BJ (cell line): ENCODE measurements at regions of chr14 and their contacts with region 1.

Region 1: GRCh38 chr14:103292426-103293374 is 41.3 kb upstream of the EIF5 start:
- DNase-seq: no peak
- H3K4me3 ChIP-seq: no peak overlapping the region
- H3K27me3 ChIP-seq: peaks cover 11% of the 10 kb centered on the region
- CTCF ChIP-seq: peak; percentile 96

Region 2: GRCh38 chr14:103078093-103078749 is 214.5 kb before region 1 on chr14:
- CTCF ChIA-PET with region 1: interaction called, 83 read pairs
- POLR2A ChIA-PET with region 1: no interaction called
- DNase-seq: no peak
- H3K4me3 ChIP-seq: no peak overlapping the region
- H3K27me3 ChIP-seq: 0 out of 2 replicates have a peak, but pooled peaks cover 1% of the 10 kb centered on the region
- CTCF ChIP-seq: peak; percentile 86

Region 3: DNA sequence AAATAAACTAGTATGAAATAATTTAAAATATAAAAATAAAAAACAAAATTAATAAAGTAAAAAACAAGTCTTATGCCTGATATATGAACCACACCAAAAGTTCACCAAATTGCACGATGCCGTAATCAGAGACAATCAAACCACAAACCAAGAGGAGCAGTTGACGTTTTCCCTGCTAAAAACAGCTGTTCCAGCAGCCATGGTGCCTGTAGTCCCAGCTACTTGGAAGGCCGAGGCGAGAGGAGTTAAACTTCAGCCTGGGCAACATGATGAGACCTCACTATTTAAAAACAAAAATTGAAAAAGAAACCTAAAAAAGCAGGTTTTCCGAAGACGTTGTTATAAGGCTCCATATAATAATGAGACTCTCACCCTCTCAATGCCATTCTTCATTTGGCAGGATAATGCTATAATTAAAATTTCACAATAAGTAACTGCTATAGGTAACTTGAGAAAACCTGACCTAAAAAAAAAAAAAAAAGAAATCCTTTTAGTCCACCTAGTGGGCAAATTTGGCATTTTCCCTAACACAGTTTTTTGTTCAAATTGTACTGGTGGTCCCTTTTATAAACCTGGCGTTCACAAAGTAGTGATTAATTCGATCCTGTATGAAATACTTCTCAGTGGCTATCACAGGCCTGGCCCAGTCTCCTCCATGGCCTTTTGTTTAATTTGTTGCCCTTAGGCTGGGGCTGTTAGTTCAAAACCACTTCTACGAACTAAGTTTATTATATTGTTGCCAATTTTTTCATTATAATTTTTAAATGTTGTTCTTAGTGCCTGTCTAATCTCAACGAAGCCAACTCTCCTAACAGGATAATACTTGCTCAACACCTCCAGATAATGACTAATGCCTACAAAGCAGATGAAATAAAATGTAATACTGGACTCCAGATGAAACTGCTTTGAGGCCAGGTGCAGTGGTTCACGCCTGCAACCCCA is 107.4 kb before region 1 on chr14:
- CTCF ChIA-PET with region 1: interaction called, 26 read pairs
- POLR2A ChIA-PET with region 1: no interaction called
- DNase-seq: no peak
- H3K4me3 ChIP-seq: no peak overlapping the region
- H3K27me3 ChIP-seq: peaks cover 6% of the 10 kb centered on the region; the same call in 1 of the 2 replicates
- CTCF ChIP-seq: peak; percentile 61

Region 4: DNA sequence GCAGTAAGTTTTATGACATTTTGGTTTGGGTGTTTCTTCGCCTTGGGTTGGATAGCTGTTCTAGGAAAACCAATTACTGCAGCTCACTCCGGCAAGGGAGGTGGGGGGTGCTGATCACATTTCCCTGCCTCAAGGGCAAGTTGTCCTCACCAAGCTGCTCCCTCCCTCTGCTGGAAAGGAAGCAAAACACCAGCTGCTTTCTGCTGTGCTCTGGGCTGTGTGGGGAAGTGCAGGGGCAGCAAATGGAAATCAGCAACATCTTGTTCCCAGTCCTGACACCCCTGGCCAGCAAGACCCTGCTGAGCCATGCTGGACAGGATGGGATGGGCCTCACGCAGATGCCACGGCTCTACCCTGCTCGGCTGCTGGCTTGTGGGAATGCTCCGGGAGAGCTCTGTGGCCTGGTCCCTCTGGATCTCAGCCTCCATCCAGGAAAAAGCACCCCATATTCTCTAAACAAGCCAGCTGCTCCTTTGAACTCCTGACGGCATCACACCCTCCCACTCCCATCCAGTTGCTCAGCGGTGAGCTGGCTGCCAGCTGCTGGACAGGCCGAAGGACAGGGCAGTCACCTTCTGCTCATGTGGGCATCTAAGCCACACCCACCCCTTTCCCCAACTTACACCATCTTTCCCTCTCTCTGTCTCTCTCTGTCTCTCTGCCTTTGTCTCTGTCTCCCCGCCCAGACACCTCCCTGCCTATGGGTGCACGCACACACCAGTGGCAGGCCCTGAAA is 11.0 kb before region 1 on chr14:
- CTCF ChIA-PET with region 1: interaction called, 59 read pairs
- POLR2A ChIA-PET with region 1: no interaction called
- DNase-seq: no peak
- H3K4me3 ChIP-seq: no peak overlapping the region
- H3K27me3 ChIP-seq: peaks cover 3% of the 10 kb centered on the region; the same call in 1 of the 2 replicates
- CTCF ChIP-seq: peak; percentile 79

Region 5: DNA sequence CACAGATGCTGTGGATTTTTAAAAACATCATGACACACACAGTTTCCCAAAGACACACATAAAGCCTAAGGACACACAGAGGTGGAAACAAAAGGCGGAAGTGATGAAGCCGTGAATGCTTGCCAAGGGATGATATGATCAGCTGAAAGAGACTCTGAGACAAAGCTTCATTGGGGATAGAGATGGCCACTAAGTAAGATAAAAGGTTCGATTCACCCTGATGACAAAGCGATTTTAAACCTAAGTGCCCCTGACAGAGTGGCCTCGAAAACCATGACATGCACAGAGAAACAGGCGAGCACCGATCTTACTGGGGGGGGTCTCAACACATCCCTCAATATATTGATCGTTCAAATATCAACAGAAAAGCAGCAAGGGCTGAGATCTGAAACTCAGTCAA is 21.0 kb after region 1 on chr14:
- CTCF ChIA-PET with region 1: interaction called, 12 read pairs
- POLR2A ChIA-PET with region 1: no interaction called
- DNase-seq: no peak
- H3K4me3 ChIP-seq: no peak overlapping the region
- H3K27me3 ChIP-seq: peaks cover 4% of the 10 kb centered on the region; the same call in 1 of the 2 replicates
- CTCF ChIP-seq: no peak